IMR-90 (cell line): ENCODE measurements at regions of chr10 and their contacts with region 1.

Region 1: GRCh38 chr10:114829160-114829909 is 7.8 kb downstream of the FHIP2A start:
- DNase-seq: no peak
- ATAC-seq: no peak
- H3K4me3 ChIP-seq: no peak overlapping the region
- H3K27ac ChIP-seq: no peak overlapping the region
- H3K4me1 ChIP-seq: peaks cover 14% of the 10 kb centered on the region
- H3K27me3 ChIP-seq: no peaks in the 10 kb centered on the region
- CTCF ChIP-seq: no peak
- POLR2A ChIP-seq: no peak
- RAD21 ChIP-seq: no peak

Region 2: GRCh38 chr10:114850126-114850525 is 20.8 kb after region 1 on chr10:
- CTCF ChIA-PET with region 1: interaction called, 3 read pairs
- POLR2A ChIA-PET with region 1: interaction called, 3 read pairs
- dilution Hi-C with region 1: no loop called
- in situ Hi-C with region 1: no loop called
- intact Hi-C with region 1: loop called (anchors 2 kb)
- DNase-seq: no peak
- ATAC-seq: no peak
- H3K4me3 ChIP-seq: no peak overlapping the region
- H3K27ac ChIP-seq: no peak overlapping the region
- H3K4me1 ChIP-seq: peaks cover 2% of the 10 kb centered on the region; the same call in 1 of the 2 replicates
- H3K27me3 ChIP-seq: no peaks in the 10 kb centered on the region
- CTCF ChIP-seq: no peak
- POLR2A ChIP-seq: no peak
- RAD21 ChIP-seq: no peak